H1 (cell line): ENCODE measurements at regions of chr14 and their contacts with region 1.

Region 1: DNA sequence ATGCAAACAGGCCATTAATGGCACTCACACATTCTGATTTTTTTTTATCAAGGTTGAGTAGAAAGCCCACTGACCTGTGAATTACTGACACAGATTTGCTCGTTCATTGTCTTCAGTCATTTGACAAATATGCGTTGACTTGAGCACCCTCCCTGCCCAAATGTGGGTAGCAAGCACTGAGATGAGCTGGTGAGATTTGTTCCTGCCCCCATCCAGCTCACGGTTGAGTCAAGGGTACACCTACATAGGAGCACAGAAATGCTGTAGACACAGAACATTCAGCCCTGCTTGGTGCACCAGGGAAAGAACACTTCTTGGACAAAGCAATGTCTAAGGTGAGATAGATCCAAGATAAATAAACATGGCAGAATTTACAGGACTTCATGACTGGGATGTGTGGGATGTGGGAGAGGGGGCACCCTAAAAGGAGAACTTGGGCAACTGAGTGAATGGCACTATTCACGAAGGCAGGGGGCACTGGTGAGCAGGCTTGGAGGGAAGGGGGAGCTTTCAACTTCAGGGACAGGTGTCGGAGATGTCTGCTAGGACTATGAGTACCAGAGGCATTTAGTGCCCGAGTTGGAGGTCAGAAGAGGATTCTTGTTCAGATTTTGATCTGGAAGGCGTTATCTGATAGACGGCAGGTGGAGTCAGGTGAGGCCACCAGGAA is 213.4 kb downstream of the VRK1 start:
- DNase-seq: peak in 1 of 2 experiments; percentile 63
- H3K4me3 ChIP-seq: no peak overlapping the region
- H3K27ac ChIP-seq: no peak overlapping the region
- H3K4me1 ChIP-seq: no peaks in the 10 kb centered on the region
- H3K27me3 ChIP-seq: no peaks in the 10 kb centered on the region
- CTCF ChIP-seq: peak; percentile 68 to 81 (median 80)
- EP300 ChIP-seq: no peak
- POLR2A ChIP-seq: no peak
- RAD21 ChIP-seq: peak; percentile 71 to 78

Region 2: DNA sequence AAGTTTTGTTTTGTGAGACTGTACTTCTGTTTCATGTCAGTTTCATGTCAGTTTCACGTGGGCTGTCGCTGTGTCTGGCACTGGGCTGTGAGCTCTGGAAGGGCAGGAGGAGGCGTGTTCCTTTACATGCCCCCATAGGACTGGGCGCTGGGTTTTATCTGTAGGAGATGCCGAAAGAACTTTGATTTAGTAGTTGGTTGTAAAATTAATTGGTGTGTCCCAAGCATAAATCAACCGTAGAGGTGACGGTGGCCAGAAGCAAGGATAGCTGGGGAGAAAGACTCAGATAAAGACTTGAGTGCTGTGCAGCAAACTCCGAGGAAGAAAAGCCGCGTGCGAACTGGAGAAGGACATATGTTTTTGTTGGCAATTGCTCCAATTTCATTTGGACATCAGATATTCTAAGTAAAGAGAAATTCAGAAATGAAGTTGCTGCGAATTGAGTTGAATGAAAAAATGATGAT is 31.0 kb before region 1 on chr14:
- CTCF ChIA-PET with region 1: interaction called, 13 read pairs
- POLR2A ChIA-PET with region 1: no interaction called
- DNase-seq: no peak
- H3K4me3 ChIP-seq: no peak overlapping the region
- H3K27ac ChIP-seq: no peak overlapping the region
- H3K4me1 ChIP-seq: no peaks in the 10 kb centered on the region
- H3K27me3 ChIP-seq: peaks cover 0 to 1% (median 0%) of the 10 kb centered on the region in 4 experiments; a peak in 1 of 7 replicates
- CTCF ChIP-seq: no peak
- EP300 ChIP-seq: no peak
- POLR2A ChIP-seq: no peak
- RAD21 ChIP-seq: no peak

Region 3: GRCh38 chr14:97021571-97022171 is 11.0 kb after region 1 on chr14:
- CTCF ChIA-PET with region 1: interaction called, 19 read pairs
- POLR2A ChIA-PET with region 1: no interaction called
- DNase-seq: no peak
- H3K4me3 ChIP-seq: no peak overlapping the region
- H3K27ac ChIP-seq: no peak overlapping the region
- H3K4me1 ChIP-seq: peaks cover 10 to 31% (median 20%) of the 10 kb centered on the region in 4 experiments
- H3K27me3 ChIP-seq: no peaks in the 10 kb centered on the region
- CTCF ChIP-seq: no peak
- EP300 ChIP-seq: no peak
- POLR2A ChIP-seq: no peak
- RAD21 ChIP-seq: no peak

Region 4: DNA sequence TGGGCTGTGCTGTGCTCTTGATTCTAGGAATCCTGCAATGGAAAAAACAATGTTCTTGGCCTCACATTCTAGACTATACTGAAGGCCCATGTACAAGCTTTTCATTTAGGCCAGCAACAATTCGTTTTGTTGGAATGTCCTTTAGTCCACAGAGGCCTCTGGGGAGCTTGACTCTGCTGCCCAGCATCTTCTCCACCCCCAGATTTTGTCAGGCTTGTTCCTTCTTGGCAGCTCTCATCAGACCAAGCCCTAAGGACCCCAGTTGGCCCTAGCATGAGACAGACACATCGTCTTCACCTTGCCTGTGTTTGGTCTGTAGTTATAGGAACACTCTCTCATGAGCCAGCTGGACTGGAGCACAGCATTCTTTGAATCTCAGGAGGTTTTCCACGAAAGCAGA is 86.7 kb after region 1 on chr14:
- CTCF ChIA-PET with region 1: interaction called, 10 read pairs
- POLR2A ChIA-PET with region 1: no interaction called
- DNase-seq: no peak
- H3K4me3 ChIP-seq: no peak overlapping the region
- H3K27ac ChIP-seq: no peak overlapping the region
- H3K4me1 ChIP-seq: peaks cover 0 to 4% (median 1%) of the 10 kb centered on the region in 4 experiments; a peak in 3 of 7 replicates
- H3K27me3 ChIP-seq: no peaks in the 10 kb centered on the region; a peak in 1 of 7 replicates
- CTCF ChIP-seq: no peak
- EP300 ChIP-seq: no peak
- POLR2A ChIP-seq: no peak
- RAD21 ChIP-seq: no peak

Region 5: DNA sequence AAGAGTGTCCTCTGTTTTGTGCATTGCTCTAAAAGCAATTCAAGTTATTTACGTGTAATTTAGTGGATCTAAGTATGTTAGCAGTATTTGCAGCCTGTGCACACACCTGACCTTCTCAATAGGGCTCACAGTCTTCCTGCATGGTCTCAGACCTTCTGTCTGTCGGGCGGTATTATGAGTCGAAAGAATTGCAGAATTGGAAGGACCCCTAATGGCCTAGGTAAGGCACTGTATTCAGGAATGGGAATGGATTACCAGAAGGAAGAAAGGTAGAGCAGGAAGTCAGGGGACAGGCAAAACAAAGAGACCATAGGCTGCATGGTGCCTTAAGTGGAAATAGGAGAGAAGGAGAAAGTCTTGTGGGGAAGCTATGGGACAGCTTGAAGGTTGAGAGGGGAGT is 128.2 kb after region 1 on chr14:
- CTCF ChIA-PET with region 1: interaction called, 12 read pairs
- POLR2A ChIA-PET with region 1: no interaction called
- DNase-seq: no peak
- H3K4me3 ChIP-seq: no peak overlapping the region
- H3K27ac ChIP-seq: no peak overlapping the region
- H3K4me1 ChIP-seq: no peaks in the 10 kb centered on the region
- H3K27me3 ChIP-seq: no peaks in the 10 kb centered on the region; a peak in 1 of 7 replicates
- CTCF ChIP-seq: peak in 2 of 3 experiments; percentile 64 to 65; a peak in 3 of 4 replicates
- EP300 ChIP-seq: no peak
- POLR2A ChIP-seq: no peak
- RAD21 ChIP-seq: peak; percentile 83 to 88